ENCODE measurements at regions of chr3 and their contacts with region 1.

Region 1: DNA sequence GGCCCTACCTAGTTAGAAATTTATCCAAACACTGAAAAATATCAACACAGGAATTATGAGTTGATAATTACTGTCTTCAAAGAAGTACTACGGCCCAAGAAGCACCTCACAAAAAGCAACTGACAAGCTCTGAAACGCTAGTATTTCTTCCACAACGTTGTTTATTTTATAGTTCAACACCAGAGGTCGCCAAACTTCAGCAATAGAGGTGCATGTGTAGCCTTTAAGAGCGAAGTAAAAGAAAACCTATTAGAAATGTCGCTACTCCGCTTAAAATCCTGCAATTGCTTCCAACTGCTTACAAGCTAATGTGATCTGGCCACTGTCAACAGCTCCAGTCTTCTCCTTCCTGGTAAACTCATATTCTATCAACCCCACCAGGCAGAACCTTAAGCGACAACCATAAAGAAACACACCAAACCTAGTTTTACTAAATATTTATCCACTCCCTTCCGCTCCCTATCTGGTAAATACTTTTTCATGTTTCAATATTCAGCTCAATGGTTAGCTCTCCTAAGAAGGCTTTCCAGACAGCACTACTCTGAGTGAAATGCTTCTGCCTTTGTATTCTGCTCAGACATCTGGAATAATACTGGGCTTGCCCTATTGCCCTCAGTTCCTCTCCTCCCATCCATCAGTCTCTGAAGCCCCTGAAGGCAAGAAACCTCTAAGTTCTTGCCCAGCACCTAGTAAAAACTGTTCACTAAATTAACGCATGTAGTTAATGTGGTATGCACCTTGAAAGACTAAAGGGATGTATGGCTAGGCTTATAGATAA is 110.2 kb downstream of the NR1I2 start:
- DNase-seq: peak; percentile 83
- ATAC-seq: peak; percentile 84
- H3K4me3 ChIP-seq: no peak overlapping the region
- H3K27ac ChIP-seq: no peak overlapping the region
- H3K4me1 ChIP-seq: no peaks in the 10 kb centered on the region
- H3K27me3 ChIP-seq: no peaks in the 10 kb centered on the region
- CTCF ChIP-seq: peak; percentile 95

Region 2: DNA sequence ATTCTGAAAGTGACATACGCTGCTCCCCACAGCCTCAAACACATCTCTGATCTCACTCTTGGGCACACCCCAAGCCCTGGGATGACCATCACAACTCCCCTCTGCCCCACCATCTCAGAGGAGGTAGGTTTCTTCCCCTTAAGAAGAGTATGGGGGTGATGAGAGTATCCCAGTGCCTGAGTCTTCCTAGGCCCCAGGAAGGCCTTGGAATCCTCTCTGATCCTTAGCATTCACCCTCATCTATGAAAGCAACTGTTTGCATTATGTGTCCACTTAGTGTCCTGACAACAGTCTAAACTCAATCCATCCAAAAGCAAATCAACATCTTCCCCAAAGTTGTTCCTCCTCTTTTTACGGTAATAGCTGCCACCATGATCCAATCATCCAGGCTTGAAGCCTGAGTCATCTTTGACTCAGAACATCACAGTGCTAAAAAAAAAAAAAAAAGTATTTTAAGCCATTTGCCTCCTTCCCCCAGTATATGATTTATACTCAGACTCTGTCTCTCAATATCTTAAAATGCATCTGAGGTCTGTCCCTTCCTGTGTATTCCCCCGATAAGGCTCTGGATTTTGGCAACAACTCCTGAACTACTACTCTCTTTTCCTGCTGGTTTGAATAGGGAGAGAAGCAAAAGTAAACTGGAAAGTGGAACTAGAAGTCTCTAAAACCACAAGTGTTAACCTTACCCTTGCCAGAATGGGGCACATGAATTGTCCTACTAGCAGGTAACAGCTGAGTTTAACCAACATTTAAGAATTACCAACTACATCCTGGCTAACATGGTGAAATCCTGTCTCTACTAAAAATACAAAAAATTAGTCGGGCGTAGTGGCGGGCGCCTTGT is 254.2 kb before region 1 on chr3:
- CTCF ChIA-PET with region 1: no interaction called
- POLR2A ChIA-PET with region 1: no interaction called
- intact Hi-C with region 1: no loop called
- DNase-seq: peak; percentile 90
- ATAC-seq: peak; percentile 85
- H3K4me3 ChIP-seq: peak overlapping the region; percentile 6; the same call in 1 of the 2 replicates
- H3K27ac ChIP-seq: peak overlapping the region; percentile 70
- H3K4me1 ChIP-seq: peaks cover 44% of the 10 kb centered on the region
- H3K27me3 ChIP-seq: no peaks in the 10 kb centered on the region
- CTCF ChIP-seq: no peak

Region 3: GRCh38 chr3:120025520-120025919 is 133.4 kb after region 1 on chr3:
- CTCF ChIA-PET with region 1: interaction called, 3 read pairs
- POLR2A ChIA-PET with region 1: no interaction called
- intact Hi-C with region 1: loop called (anchors 5 kb)
- DNase-seq: peak; percentile 71
- ATAC-seq: peak; percentile 83
- H3K4me3 ChIP-seq: peak overlapping the region; percentile 3; the same call in 1 of the 2 replicates
- H3K27ac ChIP-seq: peak overlapping the region; percentile 9
- H3K4me1 ChIP-seq: peaks cover 13% of the 10 kb centered on the region
- H3K27me3 ChIP-seq: no peaks in the 10 kb centered on the region
- CTCF ChIP-seq: no peak

Region 4: DNA sequence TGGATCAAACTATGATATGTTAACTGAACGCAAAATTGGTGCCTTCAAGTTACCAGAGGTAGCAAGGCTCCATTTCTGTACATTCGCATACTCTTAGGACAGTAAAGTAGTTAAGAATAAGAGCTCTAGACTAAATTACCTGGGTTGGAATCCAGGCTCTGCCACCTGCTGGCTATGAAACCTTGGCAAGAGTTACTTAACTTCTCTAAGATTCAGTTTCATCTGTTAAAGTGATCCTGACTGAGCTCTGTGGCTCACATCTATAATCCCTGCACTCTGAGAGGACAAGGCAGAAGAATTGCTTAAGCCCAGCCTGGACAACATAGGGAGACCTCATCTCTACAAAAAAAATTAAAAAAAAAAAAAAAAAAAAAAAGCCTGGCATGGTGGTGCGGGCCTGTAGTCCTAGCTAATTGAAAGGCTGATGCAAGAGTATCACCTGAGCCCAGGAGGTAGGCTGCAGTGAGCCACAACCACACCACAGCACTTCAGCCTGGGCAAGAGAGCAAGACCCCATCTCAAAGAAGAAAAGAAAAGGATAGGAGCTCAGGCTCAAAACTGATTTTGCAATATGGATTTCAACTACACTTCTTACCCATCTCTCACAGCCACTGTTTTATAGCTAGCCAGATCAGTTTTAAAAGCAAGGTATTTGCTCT is 180.9 kb after region 1 on chr3:
- CTCF ChIA-PET with region 1: interaction called, 3 read pairs
- POLR2A ChIA-PET with region 1: no interaction called
- intact Hi-C with region 1: loop called (anchors 5 kb)
- DNase-seq: peak; percentile 46
- ATAC-seq: peak; percentile 63
- H3K4me3 ChIP-seq: no peak overlapping the region
- H3K27ac ChIP-seq: no peak overlapping the region
- H3K4me1 ChIP-seq: no peaks in the 10 kb centered on the region
- H3K27me3 ChIP-seq: no peaks in the 10 kb centered on the region
- CTCF ChIP-seq: peak; percentile 61

Region 5: GRCh38 chr3:120182724-120183524 is 290.8 kb after region 1 on chr3:
- CTCF ChIA-PET with region 1: no interaction called
- POLR2A ChIA-PET with region 1: no interaction called
- intact Hi-C with region 1: loop called (anchors 1 kb)
- DNase-seq: peak; percentile 67
- ATAC-seq: peak; percentile 68
- H3K4me3 ChIP-seq: no peak overlapping the region
- H3K27ac ChIP-seq: no peak overlapping the region
- H3K4me1 ChIP-seq: peaks cover 32% of the 10 kb centered on the region
- H3K27me3 ChIP-seq: no peaks in the 10 kb centered on the region
- CTCF ChIP-seq: peak; percentile 91

Region 6: GRCh38 chr3:120198305-120198878 is 306.3 kb after region 1 on chr3:
- CTCF ChIA-PET with region 1: interaction called, 4 read pairs
- POLR2A ChIA-PET with region 1: no interaction called
- intact Hi-C with region 1: loop called (anchors 1 kb)
- DNase-seq: peak; percentile 81
- ATAC-seq: peak; percentile 81
- H3K4me3 ChIP-seq: no peak overlapping the region
- H3K27ac ChIP-seq: no peak overlapping the region
- H3K4me1 ChIP-seq: peaks cover 25% of the 10 kb centered on the region
- H3K27me3 ChIP-seq: no peaks in the 10 kb centered on the region
- CTCF ChIP-seq: peak; percentile 90

Measured in PC-3 (cell line).